Activated naive CD4-positive, alpha-beta T cell treated with anti-CD3 and anti-CD28 coated beads for 36 hours (primary cell): ENCODE measurements at regions of chr1 and their contacts with region 1.

Region 1: DNA sequence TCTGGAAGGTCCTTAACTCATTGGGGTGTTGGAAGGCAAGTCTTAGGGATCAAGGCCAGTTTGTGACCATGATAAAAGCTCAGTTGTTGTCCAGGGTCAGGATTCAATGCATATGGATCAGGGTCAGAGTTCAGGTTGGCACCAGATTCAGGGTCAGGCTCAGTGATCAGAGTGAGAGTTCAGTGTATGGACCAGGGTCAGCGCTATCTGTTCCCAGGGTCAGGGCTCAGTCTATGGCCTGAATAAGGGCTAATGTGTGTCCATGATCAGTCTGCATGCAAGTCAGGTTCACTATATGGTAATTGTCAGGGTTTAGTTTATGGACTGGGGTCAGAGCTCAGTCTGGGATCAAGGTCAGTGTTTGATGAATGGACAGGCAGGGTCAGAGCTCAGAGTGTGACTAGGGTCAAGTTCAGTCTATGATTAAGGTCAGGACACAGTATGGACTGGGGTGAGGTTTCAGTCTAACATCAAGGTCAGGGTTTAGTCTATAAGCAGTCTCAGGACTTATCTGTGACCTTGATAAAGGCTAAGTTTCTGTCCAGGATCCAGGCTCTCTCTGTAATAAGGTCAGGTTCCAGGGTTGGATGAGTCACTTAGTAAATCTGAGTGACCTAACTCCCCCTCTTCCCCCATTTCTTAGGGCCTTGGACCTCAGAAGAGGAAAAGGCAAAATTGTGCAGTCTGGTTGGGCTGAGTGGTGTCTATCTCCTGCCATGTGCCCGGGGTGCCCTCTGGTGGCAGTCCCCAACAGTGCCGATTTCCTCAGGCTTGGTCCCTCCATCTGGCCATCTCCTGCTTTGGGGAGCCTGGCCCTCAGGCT is 23.8 kb downstream of the KNCN start:
- DNase-seq: peak; percentile 88
- H3K4me3 Mint-ChIP-seq: no peak overlapping the region
- H3K27ac Mint-ChIP-seq: no peak overlapping the region
- H3K4me1 Mint-ChIP-seq: peaks cover 17% of the 10 kb centered on the region
- H3K27me3 Mint-ChIP-seq: peaks cover 31% of the 10 kb centered on the region

Region 2: GRCh38 chr1:46442317-46443161 is 85.1 kb before region 1 on chr1:
- CTCF ChIA-PET with region 1: interaction called, 128 read pairs
- intact Hi-C with region 1: loop called (anchors 1 kb)
- DNase-seq: peak; percentile 85
- H3K4me3 Mint-ChIP-seq: peak overlapping the region; percentile 84
- H3K27ac Mint-ChIP-seq: peak overlapping the region; percentile 65
- H3K4me1 Mint-ChIP-seq: peaks cover 18% of the 10 kb centered on the region
- H3K27me3 Mint-ChIP-seq: peaks cover 12% of the 10 kb centered on the region

Region 3: DNA sequence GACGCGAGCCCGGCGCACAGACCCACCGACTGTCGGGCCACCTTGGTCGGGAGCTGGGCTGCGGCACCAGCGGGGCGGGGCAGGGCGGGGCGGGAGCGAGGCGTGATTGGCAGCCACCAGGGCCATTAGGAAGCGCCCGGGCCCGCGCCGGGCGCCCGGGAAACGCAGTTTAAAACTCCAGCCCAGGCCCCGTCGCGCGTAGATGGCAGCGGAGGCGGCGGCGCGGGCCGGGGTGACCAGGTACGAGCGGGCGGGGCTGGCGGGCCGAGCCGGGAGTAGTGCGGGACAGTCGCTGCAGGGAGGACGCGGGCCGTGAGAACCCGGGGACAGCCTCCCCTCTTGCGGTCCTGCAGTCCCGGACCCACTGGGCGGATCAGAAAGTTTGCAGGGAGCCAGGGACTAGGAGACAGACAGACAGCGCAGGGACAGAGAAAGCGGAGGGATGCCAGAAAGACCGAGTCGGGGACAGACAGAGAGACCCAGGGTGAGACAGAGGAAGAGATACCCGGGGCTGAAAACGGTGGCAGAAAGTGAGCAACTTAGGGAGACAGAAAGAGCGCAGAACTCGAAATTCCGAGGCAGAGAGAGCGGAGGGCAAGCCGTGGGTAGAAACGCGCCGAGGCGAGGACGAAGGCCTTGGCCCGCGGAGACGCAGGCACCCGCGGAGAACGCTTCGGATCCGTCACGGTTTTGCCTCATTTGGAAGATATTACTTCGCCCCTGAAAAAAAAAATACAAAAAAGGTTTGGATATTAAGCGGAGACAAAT is 37.9 kb before region 1 on chr1 and contains the start of gene DMBX1:
- CTCF ChIA-PET with region 1: interaction called, 14 read pairs
- intact Hi-C with region 1: no loop called
- DNase-seq: peak; percentile 54
- H3K4me3 Mint-ChIP-seq: peak within 1 kb of the TSS; percentile 70
- H3K27ac Mint-ChIP-seq: no peak within 1 kb of the TSS
- H3K4me1 Mint-ChIP-seq: peaks cover 18% of the 10 kb centered on the region
- H3K27me3 Mint-ChIP-seq: peaks cover 80% of the 10 kb centered on the region
- total RNA-seq, gene DMBX1: not detected

Region 4: DNA sequence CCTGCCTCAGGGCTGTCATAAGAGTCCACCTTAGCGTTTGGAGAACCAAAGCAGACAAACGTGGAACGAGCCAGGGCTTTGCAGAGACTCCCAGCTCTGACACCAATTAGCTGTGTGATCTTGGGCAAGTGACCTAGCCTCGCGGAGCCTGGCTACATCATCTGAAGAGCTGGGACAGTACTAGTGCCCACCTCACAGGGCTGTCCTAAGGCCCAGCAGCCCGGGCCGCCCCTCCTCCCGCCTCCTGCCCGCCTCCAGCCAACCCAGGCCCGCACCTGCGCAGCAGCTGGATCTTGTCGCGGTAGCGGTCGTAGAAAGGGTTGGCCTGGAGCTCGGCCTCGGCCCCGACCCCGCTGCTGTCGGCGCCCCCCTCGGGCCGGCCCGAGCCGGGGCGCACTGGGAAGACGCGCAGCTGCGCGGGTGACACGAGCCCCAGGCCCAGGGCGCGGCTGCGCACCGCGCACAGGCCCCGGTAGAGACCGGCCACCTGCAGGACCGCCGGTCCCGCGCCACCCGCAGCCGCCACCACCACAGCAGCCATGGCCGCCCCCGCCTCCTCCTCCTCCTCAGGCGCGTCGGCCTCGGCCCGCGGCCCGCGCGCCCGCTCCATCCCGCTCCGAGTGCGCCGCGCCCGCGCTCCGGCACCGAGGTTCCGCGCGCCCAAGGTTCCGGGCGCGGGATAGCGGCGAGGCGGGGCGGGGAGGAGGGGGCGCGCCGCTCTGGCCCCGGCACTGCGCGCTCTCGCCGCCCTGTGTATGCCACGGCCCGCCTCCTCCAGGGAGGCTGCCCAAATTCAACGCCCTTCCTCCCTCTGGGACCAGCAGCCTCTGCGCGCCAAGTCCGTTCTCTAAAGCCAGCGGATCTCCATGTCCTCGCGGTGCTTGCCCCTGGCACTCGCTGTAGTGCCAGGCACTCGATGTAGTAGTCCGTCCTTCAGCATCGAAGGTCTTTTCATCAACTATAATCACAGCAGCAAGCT is 140.4 kb after region 1 on chr1 and contains the start of gene ATPAF1:
- CTCF ChIA-PET with region 1: interaction called, 5 read pairs
- intact Hi-C with region 1: loop called (anchors 2 kb)
- DNase-seq: peak; percentile 83
- H3K4me3 Mint-ChIP-seq: no peak within 1 kb of the TSS
- H3K27ac Mint-ChIP-seq: peak within 1 kb of the TSS; percentile 9
- H3K4me1 Mint-ChIP-seq: peaks cover 15% of the 10 kb centered on the region
- H3K27me3 Mint-ChIP-seq: no peaks in the 10 kb centered on the region
- total RNA-seq, gene ATPAF1: 44.5 to 49.2 TPM